Dendritic cell treated with granulocyte-macrophage colony-stimulating factor and Interleukin-4, amounts not matched to agents 40 ng/mL and 50 ng/mL, for 4 days (primary cell): ENCODE measurements at regions of chr2 and their contacts with region 1.

Region 1: DNA sequence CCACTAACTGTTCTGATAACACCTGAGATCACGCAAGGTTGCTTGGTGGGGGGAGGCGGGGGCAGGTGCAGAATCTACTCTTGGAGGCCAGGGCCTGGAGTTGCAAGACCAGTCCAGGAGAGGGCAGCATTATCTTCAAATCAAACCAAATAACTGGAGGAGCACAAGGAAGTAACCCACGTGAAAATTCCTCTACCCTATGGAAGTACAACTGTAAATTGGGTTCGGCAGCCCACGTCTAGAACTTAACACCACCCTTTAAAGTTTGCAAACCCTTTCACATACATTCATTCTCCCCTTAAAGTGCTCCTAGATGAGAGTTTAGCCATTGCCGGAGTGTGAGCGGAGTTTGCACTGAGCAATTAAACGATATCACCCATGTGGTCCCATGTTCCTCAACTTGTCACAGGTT is 19.6 kb upstream of the CXCR1 start:
- H3K4me3 Mint-ChIP-seq: no peak overlapping the region
- H3K27ac Mint-ChIP-seq: peak overlapping the region; percentile 43
- H3K4me1 Mint-ChIP-seq: peaks cover 28% of the 10 kb centered on the region
- H3K27me3 Mint-ChIP-seq: peaks cover 2% of the 10 kb centered on the region

Region 2: GRCh38 chr2:218223046-218223445 is 36.7 kb after region 1 on chr2:
- intact Hi-C with region 1: loop called (anchors 5 kb)
- H3K4me3 Mint-ChIP-seq: no peak overlapping the region
- H3K27ac Mint-ChIP-seq: no peak overlapping the region
- H3K4me1 Mint-ChIP-seq: peaks cover 77% of the 10 kb centered on the region
- H3K27me3 Mint-ChIP-seq: no peaks in the 10 kb centered on the region

Region 3: DNA sequence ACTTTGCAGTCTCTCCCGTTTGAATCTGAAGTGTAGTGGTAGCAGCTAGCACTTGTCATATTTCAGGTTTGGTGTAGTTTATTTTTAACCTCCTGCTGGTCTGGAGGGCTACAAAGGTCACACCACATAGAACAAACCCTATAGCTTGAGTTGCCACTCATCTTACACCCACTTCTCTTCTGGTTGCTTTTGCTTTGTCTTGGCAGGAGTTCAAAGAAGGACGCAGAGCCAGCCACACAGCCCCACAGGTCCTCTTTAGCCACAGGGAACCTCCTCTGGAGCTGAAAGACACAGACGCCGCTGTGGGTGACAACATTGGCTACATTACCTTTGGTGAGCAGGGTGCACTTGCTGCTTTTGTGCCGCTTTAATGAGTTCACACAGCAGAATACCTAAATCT is 58.9 kb after region 1 on chr2:
- intact Hi-C with region 1: loop called (anchors 5 kb)
- H3K4me3 Mint-ChIP-seq: no peak overlapping the region
- H3K27ac Mint-ChIP-seq: peak overlapping the region; percentile 27
- H3K4me1 Mint-ChIP-seq: peaks cover 37% of the 10 kb centered on the region
- H3K27me3 Mint-ChIP-seq: no peaks in the 10 kb centered on the region